Tibial artery (tissue), 4 donors: ENCODE measurements at regions of chr1 and their contacts with region 1.

Region 1: DNA sequence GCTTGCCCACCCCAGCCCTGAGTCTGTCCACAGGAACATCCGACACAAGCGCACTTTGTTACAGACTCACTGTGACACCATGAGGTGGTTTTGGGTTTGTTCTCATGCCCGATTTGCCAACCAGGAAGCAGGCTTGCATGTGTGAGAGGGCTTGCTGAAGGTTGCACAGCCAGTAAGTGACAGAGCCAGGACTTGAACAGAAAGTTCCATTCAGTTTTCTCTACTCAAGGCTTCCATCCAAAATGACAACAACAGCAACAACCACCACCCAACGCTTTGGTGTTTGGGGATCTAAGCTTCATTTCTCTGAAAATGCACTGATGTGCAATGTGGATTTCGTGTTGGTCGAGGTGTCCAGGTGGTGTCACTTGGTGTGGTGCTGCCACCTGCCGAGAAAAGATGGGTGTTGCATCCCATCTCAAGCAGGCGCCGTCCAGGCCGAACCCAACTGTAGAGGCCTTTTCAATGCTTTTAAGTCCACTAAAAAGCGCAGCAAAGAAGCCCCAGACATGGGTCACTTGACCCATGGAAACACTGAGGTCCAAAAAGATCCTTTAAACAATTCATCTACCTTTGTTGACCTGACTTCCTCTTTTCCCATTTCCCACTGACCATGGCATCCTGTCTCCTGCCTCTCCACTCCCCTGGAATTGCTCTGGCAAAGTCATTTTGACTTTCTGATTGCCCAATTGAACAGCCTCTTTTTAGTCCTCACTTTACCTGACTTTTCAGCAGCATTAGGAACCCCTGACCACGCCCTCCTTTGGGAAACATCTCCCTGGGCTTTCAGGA is 12.2 kb downstream of the CITED4 start:
- DNase-seq: peak; percentile 76 to 80
- H3K4me3 ChIP-seq: no peak overlapping the region
- H3K27ac ChIP-seq: no peak overlapping the region
- H3K4me1 ChIP-seq: peaks cover 0 to 15% (median 7%) of the 10 kb centered on the region in 4 donors
- H3K27me3 ChIP-seq: no peaks in the 10 kb centered on the region
- CTCF ChIP-seq: peak; percentile 92 to 93

Region 2: DNA sequence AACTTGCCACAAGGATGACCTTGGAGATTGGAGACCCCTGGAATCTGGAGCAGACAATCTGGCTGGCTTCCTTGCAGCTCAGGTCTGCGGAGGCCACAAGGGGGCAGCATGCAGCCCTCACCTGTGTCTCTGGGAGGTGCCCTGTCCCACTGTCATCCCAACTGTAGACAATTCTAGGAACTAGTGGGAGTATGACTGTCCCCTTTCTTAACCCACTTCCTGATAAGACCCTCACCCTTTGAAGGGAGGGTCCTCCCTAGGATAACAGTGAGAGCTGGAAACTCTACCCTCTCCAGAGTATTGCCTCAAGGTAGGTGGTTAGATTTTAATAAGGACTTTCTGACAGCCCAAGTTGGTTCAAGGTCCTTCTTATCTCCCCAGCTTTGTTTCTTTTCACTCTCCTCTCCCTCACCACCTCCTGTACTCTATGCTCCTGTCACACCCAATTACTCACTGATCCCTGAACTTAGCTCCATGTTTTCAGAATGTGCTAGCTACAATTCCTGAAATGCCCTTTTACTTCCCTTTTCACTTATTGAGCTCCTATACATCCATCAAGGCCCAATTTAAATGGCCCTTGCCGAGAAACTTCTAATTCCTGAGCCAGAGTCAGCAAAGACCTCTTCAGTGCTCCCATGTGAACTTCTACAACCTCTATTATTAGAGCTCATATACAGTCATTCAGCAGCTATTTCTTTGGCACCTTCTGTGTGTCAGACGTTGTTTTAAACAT is 75.6 kb before region 1 on chr1:
- intact Hi-C with region 1: loop called (anchors 2 kb)
- DNase-seq: peak in 1 of 2 donors; percentile 66
- H3K4me3 ChIP-seq: no peak overlapping the region
- H3K27ac ChIP-seq: no peak overlapping the region
- H3K4me1 ChIP-seq: peaks cover 0 to 14% (median 3%) of the 10 kb centered on the region in 4 donors
- H3K27me3 ChIP-seq: no peaks in the 10 kb centered on the region
- CTCF ChIP-seq: peak; percentile 66 to 77